CD4-positive, alpha-beta memory T cell (primary cell): ENCODE measurements at regions of chr11 and their contacts with region 1.

Region 1: GRCh38 chr11:130131961-130132850 is 27.4 kb upstream of the ST14 start:
- DNase-seq: peak; percentile 63 to 73 (median 68)
- H3K4me3 ChIP-seq: no peak overlapping the region
- H3K4me3 Mint-ChIP-seq: no peak overlapping the region
- H3K27ac ChIP-seq: no peak overlapping the region
- H3K27ac Mint-ChIP-seq: peak overlapping the region in 2 of 7 donors; percentile 37 to 39
- H3K4me1 ChIP-seq: no peaks in the 10 kb centered on the region
- H3K4me1 Mint-ChIP-seq: peaks cover 0 to 2% (median 0%) of the 10 kb centered on the region in 4 donors
- H3K27me3 ChIP-seq: no peaks in the 10 kb centered on the region
- H3K27me3 Mint-ChIP-seq: no peaks in the 10 kb centered on the region

Region 2: GRCh38 chr11:129766898-129767604 is 365.2 kb before region 1 on chr11:
- CTCF ChIA-PET with region 1: interaction called, 31 read pairs
- POLR2A ChIA-PET with region 1: no interaction called
- intact Hi-C with region 1: loop called (anchors 1 kb)
- DNase-seq: peak in 4 of 5 donors; percentile 12 to 39 (median 22)
- H3K4me3 ChIP-seq: no peak overlapping the region
- H3K4me3 Mint-ChIP-seq: peak overlapping the region in 3 of 8 donors; percentile 37 to 73 (median 52)
- H3K27ac ChIP-seq: no peak overlapping the region
- H3K27ac Mint-ChIP-seq: peak overlapping the region in 2 of 7 donors; percentile 26 to 61
- H3K4me1 ChIP-seq: no peaks in the 10 kb centered on the region
- H3K4me1 Mint-ChIP-seq: peaks cover 0 to 4% (median 4%) of the 10 kb centered on the region in 4 donors
- H3K27me3 ChIP-seq: no peaks in the 10 kb centered on the region
- H3K27me3 Mint-ChIP-seq: peaks cover 0 to 2% of the 10 kb centered on the region in 2 donors

Region 3: DNA sequence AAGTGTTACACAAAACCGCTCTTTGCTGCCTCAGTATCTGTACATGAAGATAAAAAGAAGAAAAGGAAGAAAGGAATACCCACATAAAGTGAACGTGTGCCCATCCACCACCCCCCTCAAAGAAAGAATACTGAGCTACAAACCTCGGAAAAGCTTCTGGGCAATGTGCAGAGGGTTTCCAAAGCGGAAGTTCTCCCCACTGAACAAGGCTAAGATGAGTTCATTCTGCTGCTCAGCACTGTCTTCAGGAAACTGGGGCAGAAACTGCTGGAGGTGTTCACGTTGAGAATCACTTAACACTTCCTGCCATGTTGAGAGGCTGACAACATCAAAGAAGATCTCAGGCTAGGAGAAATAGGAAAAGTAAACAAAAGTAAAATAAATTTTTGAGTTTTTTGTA is 243.8 kb before region 1 on chr11:
- CTCF ChIA-PET with region 1: interaction called, 23 read pairs
- POLR2A ChIA-PET with region 1: no interaction called
- intact Hi-C with region 1: no loop called
- DNase-seq: peak; percentile 29 to 49 (median 40)
- H3K4me3 ChIP-seq: no peak overlapping the region
- H3K4me3 Mint-ChIP-seq: peak overlapping the region in 6 of 8 donors; percentile 36 to 78 (median 55)
- H3K27ac ChIP-seq: peak overlapping the region; percentile 12
- H3K27ac Mint-ChIP-seq: peak overlapping the region; percentile 30 to 92 (median 81)
- H3K4me1 ChIP-seq: peaks cover 34% of the 10 kb centered on the region
- H3K4me1 Mint-ChIP-seq: peaks cover 27 to 60% (median 37%) of the 10 kb centered on the region in 4 donors
- H3K27me3 ChIP-seq: no peaks in the 10 kb centered on the region
- H3K27me3 Mint-ChIP-seq: no peaks in the 10 kb centered on the region

Region 4: GRCh38 chr11:129922674-129923073 is 209.5 kb before region 1 on chr11:
- CTCF ChIA-PET with region 1: interaction called, 137 read pairs
- POLR2A ChIA-PET with region 1: interaction called, 7 read pairs
- intact Hi-C with region 1: loop called (anchors 1 kb)
- DNase-seq: no peak
- H3K4me3 ChIP-seq: no peak overlapping the region
- H3K4me3 Mint-ChIP-seq: no peak overlapping the region
- H3K27ac ChIP-seq: no peak overlapping the region
- H3K27ac Mint-ChIP-seq: peak overlapping the region in 2 of 7 donors; percentile 1 to 2
- H3K4me1 ChIP-seq: peaks cover 10% of the 10 kb centered on the region
- H3K4me1 Mint-ChIP-seq: peaks cover 3 to 5% (median 4%) of the 10 kb centered on the region in 4 donors
- H3K27me3 ChIP-seq: no peaks in the 10 kb centered on the region
- H3K27me3 Mint-ChIP-seq: no peaks in the 10 kb centered on the region

Region 5: GRCh38 chr11:129992161-129992944 is 139.9 kb before region 1 on chr11:
- CTCF ChIA-PET with region 1: interaction called, 103 read pairs
- POLR2A ChIA-PET with region 1: interaction called, 8 read pairs
- intact Hi-C with region 1: loop called (anchors 1 kb)
- DNase-seq: peak; percentile 20 to 53 (median 27)
- H3K4me3 ChIP-seq: no peak overlapping the region
- H3K4me3 Mint-ChIP-seq: no peak overlapping the region
- H3K27ac ChIP-seq: no peak overlapping the region
- H3K27ac Mint-ChIP-seq: peak overlapping the region in 2 of 7 donors; percentile 27 to 52
- H3K4me1 ChIP-seq: no peaks in the 10 kb centered on the region
- H3K4me1 Mint-ChIP-seq: peaks cover 7 to 15% (median 12%) of the 10 kb centered on the region in 4 donors
- H3K27me3 ChIP-seq: no peaks in the 10 kb centered on the region
- H3K27me3 Mint-ChIP-seq: no peaks in the 10 kb centered on the region

Region 6: GRCh38 chr11:130076778-130077481 is 55.3 kb before region 1 on chr11:
- CTCF ChIA-PET with region 1: interaction called, 18 read pairs
- POLR2A ChIA-PET with region 1: no interaction called
- intact Hi-C with region 1: no loop called
- DNase-seq: no peak
- H3K4me3 ChIP-seq: no peak overlapping the region
- H3K4me3 Mint-ChIP-seq: no peak overlapping the region
- H3K27ac ChIP-seq: no peak overlapping the region
- H3K27ac Mint-ChIP-seq: no peak overlapping the region
- H3K4me1 ChIP-seq: no peaks in the 10 kb centered on the region
- H3K4me1 Mint-ChIP-seq: peaks cover 5 to 16% (median 9%) of the 10 kb centered on the region in 4 donors
- H3K27me3 ChIP-seq: no peaks in the 10 kb centered on the region
- H3K27me3 Mint-ChIP-seq: no peaks in the 10 kb centered on the region

Region 7: DNA sequence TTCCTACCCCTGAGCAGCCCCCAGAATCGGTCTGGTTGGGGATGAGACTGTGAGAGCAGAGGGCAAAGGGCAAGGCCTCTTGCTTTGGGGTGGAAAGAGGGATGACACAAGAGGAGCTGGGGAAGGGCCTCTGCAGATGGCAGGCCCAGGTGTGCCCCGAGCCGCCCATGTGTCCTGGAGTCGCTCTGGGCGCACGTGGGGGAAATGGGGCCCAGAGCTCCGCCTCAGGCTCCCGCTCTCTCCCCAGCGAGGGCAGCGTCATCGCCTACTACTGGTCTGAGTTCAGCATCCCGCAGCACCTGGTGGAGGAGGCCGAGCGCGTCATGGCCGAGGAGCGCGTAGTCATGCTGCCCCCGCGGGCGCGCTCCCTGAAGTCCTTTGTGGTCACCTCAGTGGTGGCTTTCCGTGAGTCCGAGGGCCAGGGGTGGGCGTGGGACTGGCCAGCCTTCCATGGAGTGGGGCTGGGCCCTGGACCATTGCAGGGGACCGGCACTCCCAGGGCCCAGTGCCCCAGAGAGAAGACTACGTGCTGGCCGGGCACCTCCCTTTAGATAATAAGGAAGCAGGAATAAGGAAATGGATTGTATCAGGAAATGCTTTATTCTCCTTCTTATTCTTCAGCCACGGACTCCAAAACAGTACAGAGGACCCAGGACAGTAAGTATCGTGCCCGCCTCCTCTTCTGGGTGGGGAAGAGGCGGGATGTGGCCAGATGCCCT is 57.4 kb after region 1 on chr11:
- CTCF ChIA-PET with region 1: no interaction called
- POLR2A ChIA-PET with region 1: no interaction called
- intact Hi-C with region 1: no loop called
- DNase-seq: no peak
- H3K4me3 ChIP-seq: no peak overlapping the region
- H3K4me3 Mint-ChIP-seq: no peak overlapping the region
- H3K27ac ChIP-seq: no peak overlapping the region
- H3K27ac Mint-ChIP-seq: no peak overlapping the region
- H3K4me1 ChIP-seq: no peaks in the 10 kb centered on the region
- H3K4me1 Mint-ChIP-seq: no peaks in the 10 kb centered on the region
- H3K27me3 ChIP-seq: no peaks in the 10 kb centered on the region
- H3K27me3 Mint-ChIP-seq: peaks cover 0 to 3% of the 10 kb centered on the region in 2 donors